IMR-90 (cell line): ENCODE measurements at regions of chr19 and their contacts with region 1.

Region 1: GRCh38 chr19:12294249-12295158 is at the start of gene ZNF44:
- DNase-seq: peak; percentile 91
- ATAC-seq: peak; percentile 98
- H3K4me3 ChIP-seq: peak within 1 kb of the TSS; percentile 81
- H3K27ac ChIP-seq: peak within 1 kb of the TSS; percentile 88
- H3K4me1 ChIP-seq: peaks cover 3% of the 10 kb centered on the region
- H3K27me3 ChIP-seq: no peaks in the 10 kb centered on the region
- CTCF ChIP-seq: no peak
- POLR2A ChIP-seq: no peak
- RAD21 ChIP-seq: no peak
- total RNA-seq, gene ZNF44: 6.1 and 6.6 TPM in 2 replicates

Region 2: GRCh38 chr19:12162882-12163806 is 131.4 kb before region 1 on chr19 and contains the start of gene ZNF136:
- CTCF ChIA-PET with region 1: no interaction called
- POLR2A ChIA-PET with region 1: no interaction called
- dilution Hi-C with region 1: no loop called
- in situ Hi-C with region 1: no loop called
- intact Hi-C with region 1: loop called (anchors 10 kb)
- DNase-seq: peak; percentile 95
- ATAC-seq: peak; percentile 99
- H3K4me3 ChIP-seq: peak within 1 kb of the TSS; percentile 83
- H3K27ac ChIP-seq: peak within 1 kb of the TSS; percentile 87
- H3K4me1 ChIP-seq: peaks cover 3% of the 10 kb centered on the region
- H3K27me3 ChIP-seq: no peaks in the 10 kb centered on the region
- CTCF ChIP-seq: no peak
- POLR2A ChIP-seq: peak; percentile 91
- RAD21 ChIP-seq: no peak
- total RNA-seq, gene ZNF136: 6.8 and 9.4 TPM in 2 replicates

Region 3: GRCh38 chr19:12333162-12334159 is 39.0 kb after region 1 on chr19 and contains the start of gene ZNF563:
- CTCF ChIA-PET with region 1: no interaction called
- POLR2A ChIA-PET with region 1: no interaction called
- dilution Hi-C with region 1: no loop called
- in situ Hi-C with region 1: no loop called
- intact Hi-C with region 1: loop called (anchors 5 kb)
- DNase-seq: peak; percentile 89
- ATAC-seq: peak; percentile 99
- H3K4me3 ChIP-seq: peak within 1 kb of the TSS; percentile 88
- H3K27ac ChIP-seq: peak within 1 kb of the TSS; percentile 79
- H3K4me1 ChIP-seq: peaks cover 6% of the 10 kb centered on the region
- H3K27me3 ChIP-seq: no peaks in the 10 kb centered on the region
- CTCF ChIP-seq: no peak
- POLR2A ChIP-seq: peak; percentile 29; the same call in 1 of the 2 replicates
- RAD21 ChIP-seq: no peak
- total RNA-seq, gene ZNF563: 2.0 and 3.1 TPM in 2 replicates

Region 4: GRCh38 chr19:12440541-12441316 is 146.2 kb after region 1 on chr19 and contains the start of gene ZNF443:
- CTCF ChIA-PET with region 1: no interaction called
- POLR2A ChIA-PET with region 1: no interaction called
- dilution Hi-C with region 1: no loop called
- in situ Hi-C with region 1: no loop called
- intact Hi-C with region 1: loop called (anchors 5 kb)
- DNase-seq: peak; percentile 95
- ATAC-seq: peak; percentile 99
- H3K4me3 ChIP-seq: peak within 1 kb of the TSS; percentile 56
- H3K27ac ChIP-seq: no peak within 1 kb of the TSS; the same call in 1 of the 2 replicates
- H3K4me1 ChIP-seq: no peaks in the 10 kb centered on the region
- H3K27me3 ChIP-seq: no peaks in the 10 kb centered on the region
- CTCF ChIP-seq: 0 out of 2 replicates have a peak, but pooled peaks have one; percentile 5
- POLR2A ChIP-seq: no peak
- RAD21 ChIP-seq: no peak
- total RNA-seq, gene ZNF443: 3.2 and 3.6 TPM in 2 replicates